ENCODE measurements at regions of chr11 and their contacts with region 1.

Region 1: DNA sequence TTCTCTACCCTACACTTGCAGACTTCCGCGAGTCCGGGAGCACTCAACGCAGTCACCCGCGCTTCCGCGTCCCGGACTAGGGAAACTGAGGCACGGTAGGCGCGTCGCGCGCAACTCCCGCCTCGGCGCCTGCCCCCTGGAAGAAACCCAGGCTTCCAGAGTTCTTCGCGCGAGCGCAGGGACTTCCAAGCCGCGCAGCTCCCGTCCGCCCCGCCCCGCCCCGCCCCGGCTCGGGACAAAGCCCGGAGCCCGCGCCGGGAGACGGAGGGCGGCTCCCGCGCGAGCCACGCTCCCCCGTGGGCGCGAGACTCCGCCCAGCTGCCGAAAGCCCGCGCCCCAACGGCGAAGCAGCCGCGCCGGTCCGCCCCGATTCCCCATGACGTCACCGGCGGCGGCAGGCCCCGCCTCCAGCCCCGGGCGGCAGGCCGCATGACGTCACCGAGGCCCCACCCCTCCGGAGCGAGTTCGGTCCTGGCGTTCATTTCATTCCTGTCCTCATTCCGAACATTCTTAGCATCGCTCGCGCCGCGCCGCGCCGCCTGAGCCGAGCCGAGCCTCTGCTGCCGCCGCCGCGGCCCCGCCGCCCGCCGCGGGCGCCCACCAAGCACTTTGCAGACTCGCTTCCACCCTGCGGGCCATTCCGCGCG is at the start of gene TEAD1:
- DNase-seq: peak; percentile 94
- H3K4me3 ChIP-seq: peak within 1 kb of the TSS; percentile 85
- H3K27ac ChIP-seq: peak within 1 kb of the TSS; percentile 90
- H3K4me1 ChIP-seq: peaks cover 23% of the 10 kb centered on the region
- H3K27me3 ChIP-seq: no peaks in the 10 kb centered on the region
- CTCF ChIP-seq: no peak
- total RNA-seq, gene TEAD1: 74.6 and 81.8 TPM in 2 replicates

Region 2: GRCh38 chr11:12411806-12412727 is 262.0 kb before region 1 on chr11:
- CTCF ChIA-PET with region 1: no interaction called
- POLR2A ChIA-PET with region 1: no interaction called
- intact Hi-C with region 1: loop called (anchors 10 kb)
- DNase-seq: peak; percentile 89
- H3K4me3 ChIP-seq: no peak overlapping the region
- H3K27ac ChIP-seq: peak overlapping the region; percentile 73
- H3K4me1 ChIP-seq: peaks cover 49% of the 10 kb centered on the region
- H3K27me3 ChIP-seq: no peaks in the 10 kb centered on the region
- CTCF ChIP-seq: peak; percentile 79

Region 3: DNA sequence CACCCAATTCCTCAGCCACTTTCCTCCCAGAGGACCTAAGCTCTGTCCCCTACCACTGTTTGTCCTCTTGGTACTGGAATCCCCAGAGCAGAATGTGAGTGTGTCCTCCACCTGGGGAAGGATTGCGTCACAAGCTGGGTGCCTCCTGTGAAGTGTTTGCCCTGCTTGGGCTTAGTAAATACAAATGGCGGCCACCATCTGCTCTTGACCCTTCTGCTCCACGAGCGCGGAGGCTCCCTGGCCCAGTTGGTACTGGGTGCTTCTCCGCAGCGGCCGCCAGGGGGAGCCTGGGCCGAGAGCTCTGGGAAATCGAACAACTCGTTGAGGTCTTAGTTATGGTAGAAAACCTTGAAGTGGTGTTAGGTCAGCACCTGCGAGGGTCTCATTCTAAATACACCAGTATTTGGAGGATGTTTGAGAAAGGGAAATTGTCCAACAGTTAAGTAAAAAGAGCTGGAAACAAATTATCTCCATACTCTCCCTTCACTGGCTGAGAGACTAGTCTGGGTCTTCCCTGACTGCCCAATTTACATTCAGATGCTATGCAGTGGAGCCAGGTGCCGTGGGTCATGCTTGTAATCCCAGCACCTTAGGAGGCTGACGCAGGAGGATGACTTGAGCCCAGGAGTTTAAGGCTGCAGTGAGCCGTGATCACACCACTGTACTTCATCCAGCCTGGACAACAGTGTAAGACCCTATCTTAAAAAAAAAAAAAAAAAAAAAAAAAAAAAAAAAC is 74.5 kb before region 1 on chr11:
- CTCF ChIA-PET with region 1: interaction called, 3 read pairs
- POLR2A ChIA-PET with region 1: no interaction called
- intact Hi-C with region 1: loop called (anchors 5 kb)
- DNase-seq: peak; percentile 69
- H3K4me3 ChIP-seq: no peak overlapping the region
- H3K27ac ChIP-seq: peak overlapping the region; percentile 77
- H3K4me1 ChIP-seq: peaks cover 47% of the 10 kb centered on the region
- H3K27me3 ChIP-seq: no peaks in the 10 kb centered on the region
- CTCF ChIP-seq: peak; percentile 91

Region 4: GRCh38 chr11:12653725-12654124 is 20.3 kb before region 1 on chr11:
- CTCF ChIA-PET with region 1: no interaction called
- POLR2A ChIA-PET with region 1: no interaction called
- intact Hi-C with region 1: no loop called
- DNase-seq: no peak
- H3K4me3 ChIP-seq: no peak overlapping the region
- H3K27ac ChIP-seq: no peak overlapping the region
- H3K4me1 ChIP-seq: no peaks in the 10 kb centered on the region
- H3K27me3 ChIP-seq: no peaks in the 10 kb centered on the region
- CTCF ChIP-seq: no peak

Region 5: DNA sequence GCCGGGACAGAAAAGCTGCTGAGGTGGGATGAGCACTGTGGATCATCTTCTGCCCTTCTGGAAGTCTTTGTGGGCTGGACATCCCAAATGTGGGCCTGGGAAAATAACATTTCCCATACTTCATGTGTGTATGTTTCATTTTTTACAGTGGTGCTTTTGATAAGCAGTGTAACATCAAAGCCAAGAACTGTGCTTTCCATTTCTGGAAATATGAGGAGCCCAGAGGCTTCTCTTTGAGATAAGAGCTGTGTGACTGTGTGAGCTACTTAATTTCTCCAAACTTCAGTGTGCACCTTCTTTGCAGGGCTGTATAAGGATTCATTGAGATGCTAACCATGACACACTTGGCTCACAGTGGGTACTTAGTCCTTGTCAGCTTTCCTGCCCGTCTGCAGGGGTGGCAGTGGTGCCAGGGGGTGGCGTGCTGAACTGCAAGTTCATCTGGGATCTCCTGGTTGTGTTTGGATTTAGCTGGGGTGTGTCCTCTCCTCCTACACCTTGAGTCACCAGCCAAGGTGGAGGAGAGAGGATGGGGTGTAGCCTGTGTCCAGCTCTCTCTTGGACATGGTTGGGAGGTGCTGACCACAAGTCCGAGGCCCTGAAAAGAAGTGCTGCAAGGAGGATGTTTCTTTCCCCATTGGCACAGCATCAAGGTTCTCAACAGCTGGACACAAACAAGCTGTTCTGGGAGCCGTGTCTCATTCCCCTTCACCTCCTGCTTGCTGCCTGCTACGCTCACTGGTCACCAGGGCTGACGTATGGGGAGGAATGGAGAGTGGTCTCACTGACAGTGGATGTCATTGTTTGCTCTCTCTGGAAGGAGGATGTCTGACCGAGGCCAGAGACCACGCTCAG is 139.6 kb after region 1 on chr11:
- CTCF ChIA-PET with region 1: no interaction called
- POLR2A ChIA-PET with region 1: no interaction called
- intact Hi-C with region 1: loop called (anchors 10 kb)
- DNase-seq: no peak
- H3K4me3 ChIP-seq: no peak overlapping the region
- H3K27ac ChIP-seq: no peak overlapping the region
- H3K4me1 ChIP-seq: peaks cover 54% of the 10 kb centered on the region
- H3K27me3 ChIP-seq: no peaks in the 10 kb centered on the region
- CTCF ChIP-seq: no peak

Region 6: DNA sequence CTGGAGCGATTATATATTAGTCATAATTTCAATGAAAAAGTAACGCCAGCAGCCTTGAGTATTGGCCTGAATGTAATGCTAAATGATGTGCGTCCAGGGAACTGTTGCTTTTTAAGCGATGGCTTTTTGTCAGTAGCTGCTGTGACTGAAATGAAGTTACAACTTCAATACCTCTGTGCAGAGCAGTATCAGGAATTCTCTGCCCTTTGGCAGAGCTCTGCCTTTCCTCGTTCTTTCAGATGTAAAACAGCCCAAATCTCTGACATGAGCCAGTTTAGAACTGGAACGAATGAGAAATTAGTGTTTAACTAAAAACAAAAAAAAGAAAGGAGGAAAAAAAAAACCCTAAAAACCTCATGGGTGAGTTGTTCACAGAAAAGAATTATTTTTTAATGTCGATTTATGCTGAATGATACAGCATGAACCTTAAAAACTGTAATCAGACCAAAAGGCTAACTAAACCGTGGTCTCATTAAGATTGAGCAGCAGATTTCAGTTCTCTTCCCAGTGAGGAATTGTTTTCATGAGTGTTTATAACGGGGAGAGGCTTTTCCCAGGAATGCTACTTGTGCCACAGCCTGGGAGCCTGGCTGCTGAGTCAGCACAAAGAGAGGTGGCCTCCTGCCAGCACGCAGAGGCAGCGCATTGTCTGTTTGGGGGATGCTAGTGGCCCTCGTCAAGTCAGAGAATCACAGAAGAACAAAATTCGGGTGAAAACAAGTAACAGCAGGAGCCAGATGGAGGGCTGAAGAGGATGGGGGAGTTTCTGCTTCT is 188.8 kb after region 1 on chr11:
- CTCF ChIA-PET with region 1: no interaction called
- POLR2A ChIA-PET with region 1: no interaction called
- intact Hi-C with region 1: loop called (anchors 10 kb)
- DNase-seq: peak; percentile 77
- H3K4me3 ChIP-seq: peak overlapping the region; percentile 34
- H3K27ac ChIP-seq: peak overlapping the region; percentile 78
- H3K4me1 ChIP-seq: peaks cover 41% of the 10 kb centered on the region
- H3K27me3 ChIP-seq: no peaks in the 10 kb centered on the region
- CTCF ChIP-seq: no peak

Region 7: DNA sequence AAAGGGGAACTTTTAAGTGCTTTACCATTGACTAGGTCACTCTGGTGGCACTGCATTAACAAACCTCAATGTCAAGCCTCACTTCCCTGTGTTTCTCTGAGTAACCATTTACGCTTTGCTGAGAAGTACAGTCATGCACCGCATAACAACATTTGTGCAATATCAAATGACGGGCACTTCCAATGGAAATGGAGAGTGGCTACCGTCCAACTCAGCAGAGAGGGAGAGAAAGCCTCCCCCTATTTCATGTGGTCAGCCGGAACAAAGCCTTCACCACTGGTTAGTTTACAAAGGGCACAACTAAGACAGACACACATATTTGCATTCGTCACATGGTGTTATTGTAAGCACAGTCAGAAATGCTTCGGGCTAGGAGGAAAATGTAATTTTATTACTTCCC is 452.4 kb after region 1 on chr11:
- CTCF ChIA-PET with region 1: no interaction called
- POLR2A ChIA-PET with region 1: no interaction called
- intact Hi-C with region 1: no loop called
- DNase-seq: no peak
- H3K4me3 ChIP-seq: no peak overlapping the region
- H3K27ac ChIP-seq: no peak overlapping the region
- H3K4me1 ChIP-seq: no peaks in the 10 kb centered on the region
- H3K27me3 ChIP-seq: peaks cover 20% of the 10 kb centered on the region
- CTCF ChIP-seq: no peak